ENCODE measurements at regions of chr12 and their contacts with region 1.

Region 1: GRCh38 chr12:49358483-49359141 is 8.7 kb upstream of the SPATS2 start:
- DNase-seq: peak; percentile 72
- H3K4me3 Mint-ChIP-seq: no peak overlapping the region
- H3K27ac Mint-ChIP-seq: peak overlapping the region; percentile 57
- H3K4me1 Mint-ChIP-seq: peaks cover 25% of the 10 kb centered on the region
- H3K27me3 Mint-ChIP-seq: no peaks in the 10 kb centered on the region
- CTCF ChIP-seq: peak; percentile 93

Region 2: GRCh38 chr12:49279706-49280159 is 78.9 kb before region 1 on chr12:
- CTCF ChIA-PET with region 1: interaction called, 251 read pairs
- POLR2A ChIA-PET with region 1: no interaction called
- intact Hi-C with region 1: no loop called
- DNase-seq: peak; percentile 25
- H3K4me3 Mint-ChIP-seq: no peak overlapping the region
- H3K27ac Mint-ChIP-seq: no peak overlapping the region
- H3K4me1 Mint-ChIP-seq: peaks cover 22% of the 10 kb centered on the region
- H3K27me3 Mint-ChIP-seq: no peaks in the 10 kb centered on the region
- CTCF ChIP-seq: no peak

Region 3: GRCh38 chr12:49347384-49348237 is 11.0 kb before region 1 on chr12:
- CTCF ChIA-PET with region 1: interaction called, 61 read pairs
- POLR2A ChIA-PET with region 1: interaction called, 3 read pairs
- intact Hi-C with region 1: no loop called
- DNase-seq: peak; percentile 87
- H3K4me3 Mint-ChIP-seq: peak overlapping the region; percentile 68
- H3K27ac Mint-ChIP-seq: no peak overlapping the region
- H3K4me1 Mint-ChIP-seq: peaks cover 9% of the 10 kb centered on the region
- H3K27me3 Mint-ChIP-seq: peaks cover 29% of the 10 kb centered on the region
- CTCF ChIP-seq: peak; percentile 95

Region 4: GRCh38 chr12:49515266-49515665 is 156.7 kb after region 1 on chr12:
- CTCF ChIA-PET with region 1: interaction called, 288 read pairs
- POLR2A ChIA-PET with region 1: interaction called, 45 read pairs
- intact Hi-C with region 1: loop called (anchors 1 kb)
- DNase-seq: peak; percentile 69
- H3K4me3 Mint-ChIP-seq: no peak overlapping the region
- H3K27ac Mint-ChIP-seq: peak overlapping the region; percentile 49
- H3K4me1 Mint-ChIP-seq: peaks cover 15% of the 10 kb centered on the region
- H3K27me3 Mint-ChIP-seq: no peaks in the 10 kb centered on the region
- CTCF ChIP-seq: no peak

Region 5: GRCh38 chr12:49553512-49554088 is 195.0 kb after region 1 on chr12:
- CTCF ChIA-PET with region 1: interaction called, 34 read pairs
- POLR2A ChIA-PET with region 1: interaction called, 5 read pairs
- intact Hi-C with region 1: loop called (anchors 1 kb)
- DNase-seq: peak; percentile 65
- H3K4me3 Mint-ChIP-seq: no peak overlapping the region
- H3K27ac Mint-ChIP-seq: no peak overlapping the region
- H3K4me1 Mint-ChIP-seq: peaks cover 13% of the 10 kb centered on the region
- H3K27me3 Mint-ChIP-seq: peaks cover 15% of the 10 kb centered on the region
- CTCF ChIP-seq: peak; percentile 58